ENCODE measurements at regions of chr5 and their contacts with region 1.

Region 1: DNA sequence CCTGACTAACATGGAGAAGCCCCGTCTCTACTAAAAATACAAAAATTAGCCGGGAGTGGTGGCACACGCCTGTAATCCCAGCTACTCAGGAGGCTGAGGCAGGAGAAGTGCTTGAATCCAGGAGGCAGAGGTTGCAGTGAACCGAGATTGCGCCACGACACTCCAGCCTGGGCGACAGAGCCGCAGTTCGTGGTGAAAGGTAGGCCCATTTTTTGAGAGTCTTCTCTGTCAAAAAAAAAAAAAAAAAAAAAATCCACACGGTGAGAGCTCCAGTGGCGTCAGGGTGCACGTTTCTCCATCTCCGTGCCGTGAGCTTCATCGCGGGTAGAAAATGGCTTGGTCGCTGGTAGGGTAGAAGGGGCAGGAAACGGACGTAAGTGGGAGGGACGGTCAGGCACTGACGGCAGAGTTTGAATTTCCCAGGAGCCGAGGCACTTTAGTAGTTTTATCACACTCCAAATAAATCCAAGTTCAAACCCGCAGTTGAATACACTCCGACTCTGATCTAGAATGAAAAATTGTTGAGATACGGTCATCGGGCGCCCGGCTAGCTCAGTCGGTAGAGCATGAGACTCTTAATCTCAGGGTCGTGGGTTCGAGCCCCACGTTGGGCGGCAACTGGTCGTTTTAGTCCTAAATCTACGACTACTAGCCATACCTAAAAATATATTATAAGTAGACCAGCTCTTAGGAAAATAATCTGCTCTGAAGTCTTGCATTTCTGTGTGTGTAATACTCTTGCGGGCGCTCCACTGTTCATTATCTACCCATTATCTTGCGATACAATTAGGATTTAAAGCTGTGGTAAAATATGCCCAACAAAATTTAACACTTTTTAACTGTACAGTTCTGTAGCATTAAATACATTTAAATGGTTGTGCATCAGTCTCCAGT is 2.5 kb upstream of the TRIM7 start:
- DNase-seq: peak in 33 of 35 experiments; percentile 49 to 86 (median 64)
- ATAC-seq: peak; percentile 25 to 73 (median 50)
- H3K4me3 ChIP-seq: peak overlapping the region; percentile 47 to 84
- H3K4me3 Mint-ChIP-seq: peak overlapping the region; percentile 84 to 92 (median 88)
- H3K27ac ChIP-seq: peak overlapping the region; percentile 65
- H3K27ac Mint-ChIP-seq: peak overlapping the region; percentile 93 to 95
- H3K4me1 ChIP-seq: peaks cover 11 to 37% of the 10 kb centered on the region in 2 experiments
- H3K4me1 Mint-ChIP-seq: peaks cover 31 to 46% (median 34%) of the 10 kb centered on the region in 3 donors
- H3K27me3 ChIP-seq: peaks cover 5 to 26% of the 10 kb centered on the region in 2 experiments
- H3K27me3 Mint-ChIP-seq: peaks cover 0 to 13% of the 10 kb centered on the region in 2 donors

Region 2: GRCh38 chr5:181151146-181151545 is 56.3 kb before region 1 on chr5:
- CTCF ChIA-PET with region 1: no interaction called
- POLR2A ChIA-PET with region 1: no interaction called
- DNase-seq: no peak
- ATAC-seq: no peak
- H3K4me3 ChIP-seq: no peak overlapping the region
- H3K4me3 Mint-ChIP-seq: no peak overlapping the region
- H3K27ac ChIP-seq: no peak overlapping the region
- H3K27ac Mint-ChIP-seq: no peak overlapping the region
- H3K4me1 ChIP-seq: no peaks in the 10 kb centered on the region
- H3K4me1 Mint-ChIP-seq: peaks cover 0 to 10% (median 2%) of the 10 kb centered on the region in 3 donors
- H3K27me3 ChIP-seq: peaks cover 0 to 48% of the 10 kb centered on the region in 2 experiments
- H3K27me3 Mint-ChIP-seq: peaks cover 26 to 47% of the 10 kb centered on the region in 2 donors

Region 3: DNA sequence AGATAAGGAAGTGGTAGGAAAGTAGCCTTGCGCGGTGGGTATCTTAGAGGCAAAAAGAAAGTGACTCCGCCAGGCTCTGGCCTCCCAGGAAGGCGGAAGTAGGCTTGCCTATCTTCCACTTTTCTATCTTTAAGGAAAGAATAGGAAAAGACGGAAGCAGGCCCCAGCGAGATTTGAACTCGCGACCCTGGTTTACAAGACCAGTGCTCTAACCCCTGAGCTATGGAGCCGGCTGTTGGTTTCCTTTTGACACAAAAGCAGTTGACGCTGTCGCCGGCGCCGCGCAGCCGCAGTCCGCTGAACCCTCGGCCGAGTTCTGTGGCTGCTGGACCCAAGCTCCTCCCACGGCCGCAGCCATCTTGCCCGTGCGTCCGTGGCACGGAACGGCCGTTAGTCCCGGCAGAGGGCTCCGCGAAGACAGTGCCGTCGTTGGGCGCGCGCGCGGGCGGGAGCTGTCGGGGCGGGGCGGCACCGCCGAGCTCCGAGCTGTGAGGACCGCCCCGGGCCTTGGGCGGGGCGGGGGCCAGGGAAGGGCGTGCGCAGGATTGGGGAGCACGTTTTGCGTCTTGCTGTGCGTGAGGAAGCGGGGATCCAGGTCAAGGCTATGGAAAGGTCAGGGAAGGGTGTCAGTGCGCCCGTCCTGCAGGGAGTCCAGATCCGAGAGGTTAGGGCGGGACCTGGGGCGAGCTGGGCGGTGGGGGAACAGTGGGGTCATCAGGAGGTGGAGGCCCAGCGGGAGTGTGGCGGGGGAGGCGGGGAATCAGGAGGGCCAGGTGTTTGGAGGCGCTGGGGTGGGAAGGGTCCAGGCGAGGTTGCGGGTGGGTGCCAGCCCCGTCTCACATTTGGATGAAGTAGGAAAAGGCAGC is 15.7 kb before region 1 on chr5:
- CTCF ChIA-PET with region 1: interaction called in 1 of 2 experiments, 29 read pairs
- POLR2A ChIA-PET with region 1: interaction called, 3 to 5 read pairs
- DNase-seq: peak; percentile 78 to 99 (median 93)
- ATAC-seq: peak; percentile 60 to 74 (median 68)
- H3K4me3 ChIP-seq: peak overlapping the region; percentile 70 to 99
- H3K4me3 Mint-ChIP-seq: peak overlapping the region; percentile 94 to 95 (median 94)
- H3K27ac ChIP-seq: peak overlapping the region; percentile 69
- H3K27ac Mint-ChIP-seq: peak overlapping the region; percentile 95 to 96
- H3K4me1 ChIP-seq: peaks cover 2 to 42% of the 10 kb centered on the region in 2 experiments
- H3K4me1 Mint-ChIP-seq: peaks cover 32 to 54% (median 34%) of the 10 kb centered on the region in 3 donors
- H3K27me3 ChIP-seq: no peaks in the 10 kb centered on the region
- H3K27me3 Mint-ChIP-seq: peaks cover 6 to 12% of the 10 kb centered on the region in 2 donors

Region 4: GRCh38 chr5:181255836-181256578 is 48.5 kb after region 1 on chr5:
- CTCF ChIA-PET with region 1: interaction called in 1 of 2 experiments, 4 read pairs
- POLR2A ChIA-PET with region 1: interaction called in 1 of 2 experiments, 11 read pairs
- DNase-seq: no peak
- ATAC-seq: no peak
- H3K4me3 ChIP-seq: no peak overlapping the region
- H3K4me3 Mint-ChIP-seq: peak overlapping the region in 1 of 3 donors; percentile 95
- H3K27ac ChIP-seq: no peak overlapping the region
- H3K27ac Mint-ChIP-seq: peak overlapping the region; percentile 36 to 78
- H3K4me1 ChIP-seq: peaks cover 31 to 32% of the 10 kb centered on the region in 2 experiments
- H3K4me1 Mint-ChIP-seq: peaks cover 75 to 78% (median 78%) of the 10 kb centered on the region in 3 donors
- H3K27me3 ChIP-seq: no peaks in the 10 kb centered on the region
- H3K27me3 Mint-ChIP-seq: no peaks in the 10 kb centered on the region

Region 5: DNA sequence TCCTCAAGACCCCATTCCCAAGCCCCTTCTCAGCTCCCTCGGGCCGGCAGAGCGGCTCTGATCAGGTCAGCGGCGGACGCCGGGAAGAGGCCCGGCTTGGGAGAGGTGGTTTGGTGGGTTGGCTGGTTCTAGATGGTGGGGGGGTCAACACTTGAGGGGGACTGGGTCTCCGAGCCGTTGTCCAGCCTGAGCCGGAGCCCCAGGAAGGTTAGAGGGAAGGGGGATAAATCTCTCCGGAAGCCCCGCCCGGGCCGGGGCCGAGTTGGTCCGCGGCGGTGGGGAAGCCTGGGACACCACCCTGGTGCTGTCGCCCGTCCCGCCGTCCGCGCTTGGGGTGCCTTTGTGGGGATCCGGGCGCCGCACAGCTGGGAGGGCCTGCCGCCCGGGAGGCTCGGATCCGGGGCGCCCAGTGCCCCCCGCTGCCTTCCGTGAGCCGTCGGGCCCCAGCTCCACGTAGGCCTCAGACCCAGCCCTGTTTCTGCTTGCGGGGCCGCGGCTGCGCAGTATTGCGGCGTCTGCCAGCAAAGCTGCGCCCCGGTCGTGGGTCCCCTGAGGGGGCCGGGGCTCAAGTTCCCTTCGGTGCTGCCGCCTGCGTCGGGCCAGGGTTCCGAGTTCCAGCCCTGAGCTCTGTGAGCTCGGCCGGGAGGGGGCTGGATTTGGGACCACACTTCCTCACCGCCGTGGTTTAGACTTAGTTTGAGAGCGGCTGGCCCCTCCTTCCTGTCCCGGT is 54.0 kb after region 1 on chr5:
- CTCF ChIA-PET with region 1: interaction called in 1 of 2 experiments, 5 read pairs
- POLR2A ChIA-PET with region 1: interaction called in 1 of 2 experiments, 13 read pairs
- DNase-seq: peak; percentile 53 to 85 (median 70)
- ATAC-seq: peak; percentile 59 to 70 (median 63)
- H3K4me3 ChIP-seq: peak overlapping the region; percentile 88 to 92
- H3K4me3 Mint-ChIP-seq: peak overlapping the region; percentile 95 to 99 (median 96)
- H3K27ac ChIP-seq: peak overlapping the region; percentile 98
- H3K27ac Mint-ChIP-seq: peak overlapping the region; percentile 97 to 99
- H3K4me1 ChIP-seq: peaks cover 32 to 40% of the 10 kb centered on the region in 2 experiments
- H3K4me1 Mint-ChIP-seq: peaks cover 43 to 50% (median 47%) of the 10 kb centered on the region in 3 donors
- H3K27me3 ChIP-seq: no peaks in the 10 kb centered on the region
- H3K27me3 Mint-ChIP-seq: no peaks in the 10 kb centered on the region